ENCODE measurements at regions of chr9 and their contacts with region 1.

Region 1: GRCh38 chr9:34126207-34127034 is at the start of gene DCAF12:
- DNase-seq: peak; percentile 95
- H3K4me3 ChIP-seq: peak within 1 kb of the TSS; percentile 59 to 88 (median 80)
- H3K27ac ChIP-seq: peak within 1 kb of the TSS; percentile 81 to 91 (median 89)
- H3K4me1 ChIP-seq: peaks cover 0 to 46% (median 40%) of the 10 kb centered on the region in 4 donors
- H3K27me3 ChIP-seq: no peaks in the 10 kb centered on the region
- CTCF ChIP-seq: no peak
- EP300 ChIP-seq: peak in 1 of 4 donors; percentile 31
- POLR2A ChIP-seq: peak; percentile 62 to 71
- total RNA-seq, gene DCAF12: 14.3 to 25.2 (median 20.2) TPM

Region 2: GRCh38 chr9:34048923-34049697 is 77.3 kb before region 1 on chr9:
- intact Hi-C with region 1: loop called (anchors 2 kb)
- DNase-seq: peak; percentile 99
- H3K4me3 ChIP-seq: peak overlapping the region; percentile 58 to 99 (median 84)
- H3K27ac ChIP-seq: peak overlapping the region; percentile 84 to 95 (median 92)
- H3K4me1 ChIP-seq: peaks cover 0 to 28% (median 17%) of the 10 kb centered on the region in 4 donors
- H3K27me3 ChIP-seq: no peaks in the 10 kb centered on the region
- CTCF ChIP-seq: no peak
- EP300 ChIP-seq: peak in 1 of 4 donors; percentile 39
- POLR2A ChIP-seq: no peak

Region 3: DNA sequence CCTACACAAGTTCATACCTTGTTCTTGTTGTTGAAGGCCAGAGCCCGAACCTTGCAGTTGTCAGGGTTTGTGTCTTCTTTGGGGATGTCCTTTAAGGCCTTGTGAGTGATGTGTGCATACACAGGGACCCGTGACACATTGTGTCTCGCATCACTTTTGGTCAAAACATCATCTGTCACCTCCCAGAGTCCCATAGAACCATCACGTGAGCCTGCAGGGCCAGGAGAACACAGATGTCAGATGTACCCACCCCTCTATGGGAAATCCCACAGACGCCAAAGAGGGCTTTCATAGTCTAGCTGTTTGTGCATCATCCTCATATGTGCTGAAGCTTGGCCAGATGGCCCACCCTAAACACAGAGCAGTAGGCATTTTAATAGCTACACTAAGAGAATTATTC is 28.1 kb before region 1 on chr9:
- intact Hi-C with region 1: no loop called
- DNase-seq: no peak
- H3K4me3 ChIP-seq: no peak overlapping the region
- H3K27ac ChIP-seq: no peak overlapping the region
- H3K4me1 ChIP-seq: no peaks in the 10 kb centered on the region
- H3K27me3 ChIP-seq: no peaks in the 10 kb centered on the region
- CTCF ChIP-seq: no peak
- EP300 ChIP-seq: no peak
- POLR2A ChIP-seq: no peak

Region 4: GRCh38 chr9:34163458-34163857 is 37.0 kb after region 1 on chr9:
- intact Hi-C with region 1: no loop called
- DNase-seq: no peak
- H3K4me3 ChIP-seq: no peak overlapping the region
- H3K27ac ChIP-seq: no peak overlapping the region
- H3K4me1 ChIP-seq: peaks cover 0 to 4% (median 0%) of the 10 kb centered on the region in 4 donors
- H3K27me3 ChIP-seq: no peaks in the 10 kb centered on the region
- CTCF ChIP-seq: no peak
- EP300 ChIP-seq: no peak
- POLR2A ChIP-seq: no peak

Region 5: GRCh38 chr9:34252670-34253459 is 126.4 kb after region 1 on chr9:
- intact Hi-C with region 1: loop called (anchors 1 kb)
- DNase-seq: peak; percentile 80
- H3K4me3 ChIP-seq: no peak overlapping the region
- H3K27ac ChIP-seq: peak overlapping the region; percentile 63 to 84 (median 78)
- H3K4me1 ChIP-seq: peaks cover 0 to 54% (median 45%) of the 10 kb centered on the region in 4 donors
- H3K27me3 ChIP-seq: no peaks in the 10 kb centered on the region
- CTCF ChIP-seq: peak; percentile 23 to 97 (median 92)
- EP300 ChIP-seq: no peak
- POLR2A ChIP-seq: no peak

Region 6: DNA sequence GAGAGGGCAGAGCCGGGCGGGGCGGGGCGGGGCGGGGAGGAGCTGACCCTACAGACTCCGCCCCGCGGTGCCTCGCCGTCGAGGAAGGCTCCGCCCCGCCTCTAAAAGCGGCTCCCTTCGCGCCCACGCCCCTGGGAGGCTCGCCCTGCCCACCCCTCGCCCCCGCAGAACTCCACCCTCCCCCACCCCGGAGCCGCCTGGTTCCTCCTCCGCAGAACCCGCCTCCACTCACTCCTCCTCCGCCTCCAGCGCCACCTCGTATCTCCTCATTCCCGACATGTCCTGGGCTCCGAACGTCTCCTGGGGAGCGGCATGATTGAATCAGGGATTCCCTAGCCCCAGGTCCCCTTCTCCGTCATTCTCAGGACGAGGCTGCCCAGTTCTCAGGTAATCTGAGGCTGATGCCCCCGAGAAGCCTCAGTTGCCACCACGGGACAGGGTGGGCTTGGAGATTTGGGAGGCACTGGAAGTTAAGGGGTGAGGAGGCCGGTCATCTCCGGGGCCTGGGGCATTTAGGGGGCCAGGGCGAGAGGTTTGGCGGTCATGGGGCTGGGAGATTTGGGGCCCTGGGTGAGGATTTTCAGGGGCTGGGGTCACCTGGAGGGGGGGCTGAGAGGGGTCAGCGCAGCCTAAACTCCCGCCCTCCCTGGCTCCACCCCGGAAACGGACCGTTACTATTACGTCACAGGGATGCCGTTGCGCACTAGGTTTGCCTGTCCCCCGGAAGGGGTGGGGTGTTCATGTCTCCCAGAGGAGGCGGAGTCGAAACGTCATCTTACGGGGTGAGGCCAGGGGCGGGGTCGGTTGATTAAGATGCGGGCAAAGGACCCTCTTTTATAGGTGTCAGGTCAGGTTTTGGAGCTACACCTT is 539.2 kb after region 1 on chr9:
- intact Hi-C with region 1: no loop called
- DNase-seq: peak; percentile 99
- H3K4me3 ChIP-seq: peak overlapping the region; percentile 72 to 81 (median 78)
- H3K27ac ChIP-seq: peak overlapping the region; percentile 96 to 100 (median 100)
- H3K4me1 ChIP-seq: peaks cover 0 to 25% (median 19%) of the 10 kb centered on the region in 4 donors
- H3K27me3 ChIP-seq: no peaks in the 10 kb centered on the region
- CTCF ChIP-seq: no peak
- EP300 ChIP-seq: peak in 2 of 4 donors; percentile 10 to 48
- POLR2A ChIP-seq: peak; percentile 92 to 94

Measured in sigmoid colon (tissue), 7 donors.